Activated CD8-positive, alpha-beta T cell treated with anti-CD3 and anti-CD28 coated beads for 36 hours (primary cell): ENCODE measurements at regions of chr19 and their contacts with region 1.

Region 1: GRCh38 chr19:33176670-33177416 is 17.3 kb upstream of the LRP3 start:
- DNase-seq: peak; percentile 98
- ATAC-seq: peak; percentile 93
- H3K4me3 Mint-ChIP-seq: peak overlapping the region; percentile 86
- H3K27ac Mint-ChIP-seq: peak overlapping the region; percentile 84
- H3K4me1 Mint-ChIP-seq: peaks cover 31% of the 10 kb centered on the region
- H3K27me3 Mint-ChIP-seq: peaks cover 2% of the 10 kb centered on the region
- CTCF ChIP-seq: no peak

Region 2: DNA sequence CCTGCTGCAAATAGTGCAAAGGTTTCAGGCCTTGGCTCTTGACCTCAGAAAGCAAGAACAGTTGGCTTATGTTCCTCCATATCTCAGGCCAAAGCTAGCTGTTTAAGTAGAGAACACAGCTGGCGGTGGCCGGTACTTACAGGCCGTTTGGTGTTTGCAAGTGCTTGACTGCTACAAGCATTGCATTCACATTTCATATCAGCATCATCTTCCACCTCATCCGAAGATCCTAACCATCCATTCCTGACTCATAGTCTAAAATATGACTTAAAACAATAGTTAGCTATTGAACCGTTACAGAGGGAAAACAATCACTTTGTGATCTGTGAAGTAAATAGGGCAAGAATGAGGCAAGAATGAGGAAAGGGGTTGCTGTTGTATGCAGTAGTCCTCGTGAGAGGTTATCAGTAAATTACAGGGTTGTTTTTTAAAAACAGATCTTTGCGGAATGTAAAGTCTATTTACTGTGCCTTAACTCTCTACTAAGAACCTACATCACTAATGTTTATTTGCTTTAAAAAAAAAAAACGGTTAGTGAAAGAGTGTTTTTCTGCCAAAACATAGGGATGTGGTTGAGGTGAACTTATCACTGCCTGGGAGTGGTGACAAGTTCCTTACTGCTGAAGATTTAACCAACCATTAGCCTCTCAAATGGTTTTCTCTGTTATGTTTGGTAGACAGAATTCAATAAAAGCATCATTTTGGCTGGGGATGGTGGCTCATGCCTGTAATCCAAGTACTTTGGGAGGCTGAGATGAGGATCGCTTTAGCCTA is 66.5 kb before region 1 on chr19:
- CTCF ChIA-PET with region 1: no interaction called
- POLR2A ChIA-PET with region 1: no interaction called
- intact Hi-C with region 1: no loop called
- DNase-seq: no peak
- ATAC-seq: no peak
- H3K4me3 Mint-ChIP-seq: no peak overlapping the region
- H3K27ac Mint-ChIP-seq: no peak overlapping the region
- H3K4me1 Mint-ChIP-seq: no peaks in the 10 kb centered on the region
- H3K27me3 Mint-ChIP-seq: no peaks in the 10 kb centered on the region
- CTCF ChIP-seq: no peak

Region 3: DNA sequence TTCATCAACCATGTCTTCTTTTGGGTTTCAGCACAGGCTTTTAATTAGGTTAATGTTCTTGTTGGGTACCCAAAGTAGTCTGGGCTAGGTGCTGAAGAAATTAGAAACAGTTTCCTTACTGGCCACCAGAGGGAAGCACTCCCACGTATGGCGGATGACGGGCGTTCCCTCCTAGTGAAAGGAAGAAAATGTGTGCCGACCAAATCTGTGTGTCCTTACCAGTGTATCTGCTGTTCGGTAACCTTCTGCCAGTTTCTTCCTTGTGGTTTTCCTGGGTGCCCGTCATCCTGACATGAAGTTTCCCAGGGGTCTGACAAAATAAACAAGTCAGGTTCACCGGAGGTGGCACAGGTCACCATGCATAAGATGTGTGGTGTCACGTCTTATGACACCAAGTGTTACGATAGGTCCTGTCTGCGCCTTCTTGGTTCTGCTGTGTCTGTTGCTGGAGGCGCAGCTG is 50.9 kb before region 1 on chr19:
- CTCF ChIA-PET with region 1: interaction called, 14 read pairs
- POLR2A ChIA-PET with region 1: interaction called, 3 read pairs
- intact Hi-C with region 1: no loop called
- DNase-seq: peak; percentile 72
- ATAC-seq: peak; percentile 97
- H3K4me3 Mint-ChIP-seq: no peak overlapping the region
- H3K27ac Mint-ChIP-seq: no peak overlapping the region
- H3K4me1 Mint-ChIP-seq: peaks cover 2% of the 10 kb centered on the region
- H3K27me3 Mint-ChIP-seq: no peaks in the 10 kb centered on the region
- CTCF ChIP-seq: peak; percentile 79

Region 4: GRCh38 chr19:33143897-33144405 is 32.9 kb before region 1 on chr19:
- CTCF ChIA-PET with region 1: interaction called, 24 read pairs
- POLR2A ChIA-PET with region 1: interaction called, 6 read pairs
- intact Hi-C with region 1: loop called (anchors 5 kb)
- DNase-seq: peak; percentile 76
- ATAC-seq: peak; percentile 100
- H3K4me3 Mint-ChIP-seq: no peak overlapping the region
- H3K27ac Mint-ChIP-seq: no peak overlapping the region
- H3K4me1 Mint-ChIP-seq: peaks cover 4% of the 10 kb centered on the region
- H3K27me3 Mint-ChIP-seq: peaks cover 3% of the 10 kb centered on the region
- CTCF ChIP-seq: peak; percentile 93

Region 5: GRCh38 chr19:33156334-33156733 is 20.5 kb before region 1 on chr19:
- CTCF ChIA-PET with region 1: interaction called, 27 read pairs
- POLR2A ChIA-PET with region 1: interaction called, 52 read pairs
- intact Hi-C with region 1: no loop called
- DNase-seq: no peak
- ATAC-seq: no peak
- H3K4me3 Mint-ChIP-seq: no peak overlapping the region
- H3K27ac Mint-ChIP-seq: no peak overlapping the region
- H3K4me1 Mint-ChIP-seq: peaks cover 25% of the 10 kb centered on the region
- H3K27me3 Mint-ChIP-seq: no peaks in the 10 kb centered on the region
- CTCF ChIP-seq: no peak

Region 6: GRCh38 chr19:33197591-33198000 is 20.8 kb after region 1 on chr19:
- CTCF ChIA-PET with region 1: interaction called, 10 read pairs
- POLR2A ChIA-PET with region 1: interaction called, 3 read pairs
- intact Hi-C with region 1: no loop called
- DNase-seq: no peak
- ATAC-seq: no peak
- H3K4me3 Mint-ChIP-seq: no peak overlapping the region
- H3K27ac Mint-ChIP-seq: no peak overlapping the region
- H3K4me1 Mint-ChIP-seq: peaks cover 6% of the 10 kb centered on the region
- H3K27me3 Mint-ChIP-seq: peaks cover 12% of the 10 kb centered on the region
- CTCF ChIP-seq: no peak

Region 7: GRCh38 chr19:33275933-33276619 is 99.2 kb after region 1 on chr19:
- CTCF ChIA-PET with region 1: no interaction called
- POLR2A ChIA-PET with region 1: no interaction called
- intact Hi-C with region 1: no loop called
- DNase-seq: no peak
- ATAC-seq: no peak
- H3K4me3 Mint-ChIP-seq: no peak overlapping the region
- H3K27ac Mint-ChIP-seq: no peak overlapping the region
- H3K4me1 Mint-ChIP-seq: peaks cover 17% of the 10 kb centered on the region
- H3K27me3 Mint-ChIP-seq: no peaks in the 10 kb centered on the region
- CTCF ChIP-seq: no peak

Region 8: GRCh38 chr19:33373701-33374421 is 197.0 kb after region 1 on chr19 and contains the start of gene CEBPG:
- CTCF ChIA-PET with region 1: interaction called, 11 read pairs
- POLR2A ChIA-PET with region 1: interaction called, 5 read pairs
- intact Hi-C with region 1: no loop called
- DNase-seq: peak; percentile 58
- ATAC-seq: peak; percentile 43
- H3K4me3 Mint-ChIP-seq: peak within 1 kb of the TSS; percentile 84
- H3K27ac Mint-ChIP-seq: peak within 1 kb of the TSS; percentile 84
- H3K4me1 Mint-ChIP-seq: peaks cover 47% of the 10 kb centered on the region
- H3K27me3 Mint-ChIP-seq: no peaks in the 10 kb centered on the region
- CTCF ChIP-seq: peak; percentile 24
- total RNA-seq, gene CEBPG: 28.3 to 30.1 TPM